ENCODE measurements at regions of chr1 and their contacts with region 1.

Region 1: GRCh38 chr1:25343872-25344271 is 5.7 kb downstream of the TMEM50A start:
- DNase-seq: no peak
- H3K4me3 ChIP-seq: no peak overlapping the region
- H3K27ac ChIP-seq: no peak overlapping the region
- H3K4me1 ChIP-seq: no peaks in the 10 kb centered on the region
- H3K27me3 ChIP-seq: no peaks in the 10 kb centered on the region
- CTCF ChIP-seq: no peak
- POLR2A ChIP-seq: no peak

Region 2: DNA sequence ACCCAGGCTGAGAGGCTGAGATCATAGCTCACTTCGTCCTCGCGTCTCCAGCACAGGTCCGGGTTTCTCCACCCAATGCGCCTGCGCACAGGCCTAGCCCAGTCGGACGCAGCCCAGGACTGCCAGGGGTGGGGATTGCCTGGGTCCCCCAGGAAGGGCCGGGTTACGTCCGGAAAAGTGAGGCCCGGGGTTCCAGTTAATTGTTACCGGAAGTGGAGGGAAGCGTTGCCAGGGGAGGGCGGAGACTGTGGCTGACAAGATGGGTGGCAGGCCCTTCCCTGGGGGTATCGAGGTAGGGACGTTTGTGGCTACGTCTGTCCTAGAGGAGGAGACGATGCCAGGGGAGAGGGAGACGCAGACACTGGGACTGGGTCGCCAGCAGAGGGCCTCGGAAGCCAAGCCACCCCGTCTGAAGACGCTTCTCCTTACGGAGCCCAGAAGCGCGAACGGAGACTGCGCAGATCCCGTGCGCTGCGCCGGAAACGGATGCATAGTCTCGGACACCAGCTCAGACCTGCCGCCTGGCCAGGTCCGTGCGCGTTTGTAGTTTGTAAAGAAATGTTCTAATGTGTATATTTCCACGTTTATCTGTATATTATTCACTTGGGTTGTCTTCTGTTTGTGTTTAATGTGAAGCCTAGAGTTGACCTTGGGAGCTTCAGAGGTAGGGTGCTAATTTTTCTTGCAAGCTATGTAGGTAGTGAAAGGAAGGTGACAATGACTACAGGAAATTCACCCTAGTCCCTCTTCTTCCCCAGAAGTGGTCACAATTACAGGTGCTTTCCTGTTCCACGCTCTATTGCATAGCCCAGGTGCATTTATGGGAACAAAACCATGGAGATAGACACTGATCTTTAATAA is 104.0 kb before region 1 on chr1:
- intact Hi-C with region 1: loop called (anchors 10 kb)
- DNase-seq: peak; percentile 92
- H3K4me3 ChIP-seq: peak overlapping the region; percentile 30 to 43
- H3K27ac ChIP-seq: peak overlapping the region; percentile 91 to 96
- H3K4me1 ChIP-seq: peaks cover 15% of the 10 kb centered on the region
- H3K27me3 ChIP-seq: no peaks in the 10 kb centered on the region
- CTCF ChIP-seq: peak in 3 of 4 experiments; percentile 68 to 90 (median 83)
- POLR2A ChIP-seq: peak; percentile 32

Measured in prostate gland (tissue), 2 donors.